Naive thymus-derived CD4-positive, alpha-beta T cell (primary cell): ENCODE measurements at regions of chr20 and their contacts with region 1.

Region 1: DNA sequence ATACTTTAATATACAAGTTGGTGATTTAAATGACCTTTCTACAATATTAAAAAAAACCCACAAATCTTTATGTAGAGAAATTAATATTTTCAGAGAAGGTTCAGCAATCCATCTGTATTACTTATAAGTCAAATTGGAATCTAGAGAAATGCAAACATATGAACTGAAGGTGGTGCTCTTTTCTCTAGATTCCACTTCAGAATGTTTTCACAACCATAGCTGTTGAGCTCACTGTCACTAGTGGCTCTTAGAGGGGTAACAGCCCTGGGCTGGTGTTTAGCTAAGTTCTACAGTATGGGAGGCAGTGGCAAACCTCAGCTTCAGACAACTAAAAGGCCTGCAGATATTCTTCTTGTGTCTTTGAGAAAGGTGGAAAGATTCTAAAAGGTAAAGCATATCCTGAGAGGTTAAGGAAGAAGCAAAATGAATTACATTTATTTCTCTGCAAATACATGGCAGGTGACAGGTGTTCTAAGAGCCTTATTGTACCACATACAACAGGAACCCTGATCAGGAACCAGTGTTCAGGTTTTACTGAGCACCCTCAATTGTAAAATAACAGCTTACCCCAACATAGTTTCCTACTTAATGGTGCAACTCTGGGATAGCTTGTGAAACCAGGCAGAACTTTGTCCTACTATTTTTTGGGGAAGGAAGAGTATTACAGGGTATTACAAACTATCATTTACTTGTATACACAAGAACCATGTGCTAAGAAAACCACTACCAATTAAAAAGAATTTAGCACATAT is 56.6 kb upstream of the SAMHD1 start:
- DNase-seq: peak in 7 of 9 donors; percentile 60 to 80 (median 64)
- ATAC-seq: peak; percentile 93
- H3K4me3 ChIP-seq: no peak overlapping the region
- H3K4me3 Mint-ChIP-seq: peak overlapping the region in 6 of 10 donors; percentile 29 to 72 (median 48)
- H3K27ac ChIP-seq: peak overlapping the region; percentile 59
- H3K27ac Mint-ChIP-seq: peak overlapping the region; percentile 73 to 97 (median 89)
- H3K4me1 ChIP-seq: peaks cover 6 to 7% of the 10 kb centered on the region in 2 donors
- H3K4me1 Mint-ChIP-seq: peaks cover 14 to 39% (median 35%) of the 10 kb centered on the region in 7 donors
- H3K27me3 ChIP-seq: no peaks in the 10 kb centered on the region
- H3K27me3 Mint-ChIP-seq: no peaks in the 10 kb centered on the region

Region 2: DNA sequence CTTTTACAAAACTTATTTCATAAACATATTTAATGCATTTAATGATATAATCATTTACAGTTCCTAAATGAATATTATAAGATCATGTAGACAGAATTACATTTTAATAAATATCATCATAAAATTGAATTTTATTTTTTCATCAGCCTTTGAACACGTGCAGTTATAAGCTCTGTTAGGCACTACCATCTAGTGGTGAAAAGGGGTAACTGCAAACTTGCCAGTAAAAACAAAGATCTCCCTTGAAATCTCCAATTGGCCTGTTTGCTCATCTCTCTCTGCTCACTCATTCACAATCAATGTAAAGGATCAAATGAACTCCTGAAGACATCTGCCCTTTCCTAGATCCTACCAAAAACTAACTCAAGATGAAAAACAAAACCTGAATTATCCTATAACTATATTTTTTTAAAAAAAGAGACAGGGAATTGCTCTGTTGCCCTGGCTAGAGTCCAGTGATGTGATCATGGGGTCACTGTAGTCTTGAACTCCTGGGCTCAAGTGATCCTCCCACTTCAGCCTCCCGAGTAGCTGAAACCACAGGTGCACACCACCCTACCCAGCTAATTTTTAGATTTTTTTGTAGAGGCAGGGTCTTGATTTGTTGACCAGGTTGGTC is 88.2 kb before region 1 on chr20:
- CTCF ChIA-PET with region 1: interaction called, 10 read pairs
- POLR2A ChIA-PET with region 1: interaction called, 5 read pairs
- intact Hi-C with region 1: no loop called
- DNase-seq: peak in 7 of 9 donors; percentile 43 to 73 (median 67)
- ATAC-seq: peak; percentile 90
- H3K4me3 ChIP-seq: no peak overlapping the region
- H3K4me3 Mint-ChIP-seq: peak overlapping the region in 5 of 10 donors; percentile 2 to 34 (median 26)
- H3K27ac ChIP-seq: peak overlapping the region; percentile 47
- H3K27ac Mint-ChIP-seq: peak overlapping the region; percentile 56 to 98 (median 75)
- H3K4me1 ChIP-seq: peaks cover 0 to 30% of the 10 kb centered on the region in 2 donors
- H3K4me1 Mint-ChIP-seq: peaks cover 15 to 44% (median 24%) of the 10 kb centered on the region in 7 donors
- H3K27me3 ChIP-seq: no peaks in the 10 kb centered on the region
- H3K27me3 Mint-ChIP-seq: no peaks in the 10 kb centered on the region

Region 3: GRCh38 chr20:36988494-36988966 is 19.5 kb before region 1 on chr20:
- CTCF ChIA-PET with region 1: interaction called, 6 read pairs
- POLR2A ChIA-PET with region 1: interaction called, 6 read pairs
- intact Hi-C with region 1: loop called in 1 of 2 experiments (anchors 2 kb)
- DNase-seq: peak in 7 of 9 donors; percentile 57 to 77 (median 66)
- ATAC-seq: peak; percentile 76
- H3K4me3 ChIP-seq: no peak overlapping the region
- H3K4me3 Mint-ChIP-seq: peak overlapping the region in 9 of 10 donors; percentile 18 to 85 (median 62)
- H3K27ac ChIP-seq: peak overlapping the region; percentile 72
- H3K27ac Mint-ChIP-seq: peak overlapping the region; percentile 62 to 99 (median 97)
- H3K4me1 ChIP-seq: peaks cover 9 to 32% of the 10 kb centered on the region in 2 donors
- H3K4me1 Mint-ChIP-seq: peaks cover 27 to 66% (median 53%) of the 10 kb centered on the region in 7 donors
- H3K27me3 ChIP-seq: no peaks in the 10 kb centered on the region
- H3K27me3 Mint-ChIP-seq: no peaks in the 10 kb centered on the region

Region 4: DNA sequence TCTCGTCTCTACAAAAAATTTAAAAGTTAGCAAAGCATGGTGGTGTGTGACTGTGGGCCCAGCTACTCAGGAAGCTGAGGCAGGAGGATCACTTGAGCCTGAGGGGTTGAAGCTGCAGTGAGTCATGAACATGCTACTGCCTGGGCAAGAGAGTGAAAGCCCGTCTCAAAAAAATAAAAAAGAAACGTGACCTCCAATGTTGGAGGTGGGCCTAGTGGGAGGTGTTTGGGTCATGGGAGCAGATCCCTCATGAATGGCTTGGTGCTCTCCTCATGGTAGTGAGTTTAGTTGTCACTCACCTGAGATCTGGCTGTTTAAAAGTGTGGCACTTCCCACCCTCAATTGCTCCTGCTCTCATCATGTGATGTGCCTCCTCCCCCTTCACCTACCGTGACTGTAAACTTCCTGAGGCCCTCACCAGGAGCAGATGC is 63.4 kb after region 1 on chr20:
- CTCF ChIA-PET with region 1: interaction called, 18 read pairs
- POLR2A ChIA-PET with region 1: interaction called, 5 read pairs
- intact Hi-C with region 1: no loop called
- DNase-seq: peak in 6 of 9 donors; percentile 13 to 31 (median 21)
- ATAC-seq: peak; percentile 48
- H3K4me3 ChIP-seq: no peak overlapping the region
- H3K4me3 Mint-ChIP-seq: peak overlapping the region; percentile 39 to 69 (median 57)
- H3K27ac ChIP-seq: peak overlapping the region; percentile 49
- H3K27ac Mint-ChIP-seq: peak overlapping the region; percentile 80 to 93 (median 87)
- H3K4me1 ChIP-seq: peaks cover 14 to 19% of the 10 kb centered on the region in 2 donors
- H3K4me1 Mint-ChIP-seq: peaks cover 14 to 33% (median 29%) of the 10 kb centered on the region in 7 donors
- H3K27me3 ChIP-seq: no peaks in the 10 kb centered on the region
- H3K27me3 Mint-ChIP-seq: no peaks in the 10 kb centered on the region

Region 5: GRCh38 chr20:37145005-37145404 is 136.9 kb after region 1 on chr20:
- CTCF ChIA-PET with region 1: no interaction called
- POLR2A ChIA-PET with region 1: no interaction called
- intact Hi-C with region 1: no loop called
- DNase-seq: no peak
- ATAC-seq: no peak
- H3K4me3 ChIP-seq: no peak overlapping the region
- H3K4me3 Mint-ChIP-seq: no peak overlapping the region
- H3K27ac ChIP-seq: no peak overlapping the region
- H3K27ac Mint-ChIP-seq: no peak overlapping the region
- H3K4me1 ChIP-seq: no peaks in the 10 kb centered on the region
- H3K4me1 Mint-ChIP-seq: no peaks in the 10 kb centered on the region
- H3K27me3 ChIP-seq: no peaks in the 10 kb centered on the region
- H3K27me3 Mint-ChIP-seq: peaks cover 0 to 2% (median 0%) of the 10 kb centered on the region in 5 donors

Region 6: GRCh38 chr20:37178839-37179670 is 171.0 kb after region 1 on chr20 and contains the starts of genes MROH8 and RPN2:
- CTCF ChIA-PET with region 1: interaction called, 8 read pairs
- POLR2A ChIA-PET with region 1: interaction called, 10 read pairs
- intact Hi-C with region 1: loop called (anchors 1 to 5 kb)
- DNase-seq: peak; percentile 83 to 95 (median 92)
- ATAC-seq: peak; percentile 96
- H3K4me3 ChIP-seq: peak within 1 kb of the TSS; percentile 85
- H3K4me3 Mint-ChIP-seq: peak within 1 kb of the TSS; percentile 89 to 99 (median 96)
- H3K27ac ChIP-seq: peak within 1 kb of the TSS; percentile 87
- H3K27ac Mint-ChIP-seq: peak within 1 kb of the TSS; percentile 94 to 99 (median 97)
- H3K4me1 ChIP-seq: peaks cover 13 to 15% of the 10 kb centered on the region in 2 donors
- H3K4me1 Mint-ChIP-seq: peaks cover 34 to 48% (median 36%) of the 10 kb centered on the region in 7 donors
- H3K27me3 ChIP-seq: no peaks in the 10 kb centered on the region
- H3K27me3 Mint-ChIP-seq: peaks cover 0 to 6% (median 0%) of the 10 kb centered on the region in 5 donors
- total RNA-seq, gene MROH8: 1.2 to 1.9 (median 1.6) TPM
- total RNA-seq, gene RPN2: 88.7 to 222 (median 108) TPM

Region 7: GRCh38 chr20:37257988-37258387 is 249.9 kb after region 1 on chr20:
- CTCF ChIA-PET with region 1: no interaction called
- POLR2A ChIA-PET with region 1: no interaction called
- intact Hi-C with region 1: no loop called
- DNase-seq: no peak
- ATAC-seq: no peak
- H3K4me3 ChIP-seq: no peak overlapping the region
- H3K4me3 Mint-ChIP-seq: no peak overlapping the region
- H3K27ac ChIP-seq: no peak overlapping the region
- H3K27ac Mint-ChIP-seq: peak overlapping the region in 2 of 9 donors; percentile 43 to 53
- H3K4me1 ChIP-seq: no peaks in the 10 kb centered on the region
- H3K4me1 Mint-ChIP-seq: peaks cover 0 to 1% (median 0%) of the 10 kb centered on the region in 7 donors
- H3K27me3 ChIP-seq: no peaks in the 10 kb centered on the region
- H3K27me3 Mint-ChIP-seq: peaks cover 0 to 11% (median 9%) of the 10 kb centered on the region in 5 donors

Region 8: DNA sequence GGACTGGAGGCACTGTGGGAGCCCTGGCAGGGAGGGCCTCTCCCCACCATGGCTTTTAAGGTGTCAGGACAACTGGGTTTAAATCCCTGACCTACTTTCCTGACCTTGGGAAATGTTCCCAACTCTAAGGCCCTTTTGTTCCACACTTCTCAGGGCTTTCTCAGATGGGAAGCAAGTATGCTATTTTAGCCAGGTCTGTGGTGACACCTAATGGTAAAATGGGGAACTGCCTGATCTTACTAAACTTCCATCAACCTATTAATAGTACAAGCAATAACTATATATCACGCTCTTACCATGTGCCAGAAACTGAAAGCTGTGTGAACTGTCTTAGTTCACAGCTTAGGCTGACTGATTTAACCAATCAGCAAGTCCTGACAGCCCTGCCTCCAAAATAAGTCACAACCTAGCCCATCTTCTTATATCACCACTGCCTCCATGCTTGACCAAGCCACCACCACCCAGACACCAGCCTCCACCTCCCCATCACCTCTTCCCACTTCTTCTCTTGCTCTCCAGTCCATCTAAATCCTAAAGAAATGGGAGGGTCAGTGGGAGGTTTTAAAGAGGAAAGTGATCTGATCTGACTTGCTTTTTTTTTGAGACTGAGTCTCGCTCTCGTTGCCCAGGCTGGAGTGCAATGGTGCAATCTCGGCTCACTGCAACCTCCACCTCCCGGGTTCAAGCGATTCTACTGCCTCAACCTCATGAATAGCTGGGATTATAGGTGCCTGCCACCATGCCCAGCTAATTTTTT is 526.5 kb after region 1 on chr20:
- CTCF ChIA-PET with region 1: no interaction called
- POLR2A ChIA-PET with region 1: no interaction called
- intact Hi-C with region 1: loop called in 1 of 2 experiments (anchors 1 kb)
- DNase-seq: peak in 7 of 9 donors; percentile 37 to 63 (median 55)
- ATAC-seq: peak; percentile 96
- H3K4me3 ChIP-seq: no peak overlapping the region
- H3K4me3 Mint-ChIP-seq: no peak overlapping the region
- H3K27ac ChIP-seq: no peak overlapping the region
- H3K27ac Mint-ChIP-seq: peak overlapping the region in 1 of 9 donors; percentile 5
- H3K4me1 ChIP-seq: no peaks in the 10 kb centered on the region
- H3K4me1 Mint-ChIP-seq: peaks cover 0 to 6% (median 0%) of the 10 kb centered on the region in 7 donors
- H3K27me3 ChIP-seq: no peaks in the 10 kb centered on the region
- H3K27me3 Mint-ChIP-seq: peaks cover 0 to 9% (median 6%) of the 10 kb centered on the region in 5 donors